Left ventricle myocardium superior (tissue), 1 donor: ENCODE measurements at regions of chr14 and their contacts with region 1.

Region 1: GRCh38 chr14:55707365-55707804 is 127.4 kb downstream of the KTN1 start:
- DNase-seq: no peak
- ATAC-seq: peak; percentile 28

Region 2: DNA sequence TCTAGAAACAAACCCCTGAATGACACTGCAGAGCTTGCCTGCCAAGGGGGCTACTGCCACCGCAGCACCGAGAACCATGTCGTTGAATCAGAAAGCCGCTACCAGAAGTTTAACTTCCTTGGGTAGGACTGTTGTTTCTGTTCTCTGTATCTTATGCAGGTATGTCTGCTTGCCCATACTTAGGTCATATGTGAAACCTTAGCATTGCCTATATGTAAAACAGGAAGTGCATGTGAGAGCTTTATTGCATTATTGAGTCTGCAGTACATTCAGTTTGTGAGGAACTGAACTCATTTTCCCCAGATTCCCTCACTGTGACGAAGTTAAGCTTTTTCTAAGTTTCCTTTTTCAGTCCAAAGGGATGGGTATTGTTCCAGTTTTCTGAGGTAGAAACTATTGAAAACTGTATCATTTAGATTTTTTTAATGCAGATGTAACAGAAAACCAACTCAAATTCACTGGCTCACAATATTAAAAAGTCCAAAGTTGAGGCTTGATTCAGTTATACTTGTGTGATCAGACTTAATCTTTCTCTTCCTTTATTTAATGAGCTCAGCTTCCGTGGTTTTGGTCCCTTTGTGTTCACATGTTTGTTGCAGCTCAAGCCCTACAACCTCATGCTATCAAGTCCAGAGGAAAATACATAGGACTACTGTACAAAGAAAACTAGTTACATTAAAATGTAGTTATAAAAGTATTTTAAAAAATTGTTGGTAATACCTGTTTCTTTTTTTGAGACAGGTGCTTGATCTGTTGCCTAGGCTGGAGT is 429.2 kb before region 1 on chr14:
- intact Hi-C with region 1: no loop called
- DNase-seq: no peak
- ATAC-seq: no peak

Region 3: DNA sequence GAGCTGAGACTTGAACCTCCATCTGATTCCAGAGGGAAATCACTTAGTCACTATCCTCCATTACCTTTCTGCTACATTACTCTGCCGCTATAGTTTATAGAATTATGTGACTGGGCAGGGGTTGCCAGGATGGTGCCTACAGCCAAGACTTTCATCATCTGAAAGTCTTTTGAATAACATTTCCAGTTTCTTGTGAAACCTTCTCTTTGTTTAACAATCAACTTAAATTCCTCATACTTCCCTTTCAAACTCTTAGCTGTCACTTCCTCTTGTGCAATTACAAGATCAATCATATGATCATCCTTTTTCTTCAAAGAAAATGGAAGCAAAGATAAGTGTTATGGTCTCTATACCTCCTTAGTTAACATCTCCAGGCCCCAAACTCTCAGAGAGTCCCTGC is 385.4 kb after region 1 on chr14:
- intact Hi-C with region 1: no loop called
- DNase-seq: no peak
- ATAC-seq: no peak

Region 4: DNA sequence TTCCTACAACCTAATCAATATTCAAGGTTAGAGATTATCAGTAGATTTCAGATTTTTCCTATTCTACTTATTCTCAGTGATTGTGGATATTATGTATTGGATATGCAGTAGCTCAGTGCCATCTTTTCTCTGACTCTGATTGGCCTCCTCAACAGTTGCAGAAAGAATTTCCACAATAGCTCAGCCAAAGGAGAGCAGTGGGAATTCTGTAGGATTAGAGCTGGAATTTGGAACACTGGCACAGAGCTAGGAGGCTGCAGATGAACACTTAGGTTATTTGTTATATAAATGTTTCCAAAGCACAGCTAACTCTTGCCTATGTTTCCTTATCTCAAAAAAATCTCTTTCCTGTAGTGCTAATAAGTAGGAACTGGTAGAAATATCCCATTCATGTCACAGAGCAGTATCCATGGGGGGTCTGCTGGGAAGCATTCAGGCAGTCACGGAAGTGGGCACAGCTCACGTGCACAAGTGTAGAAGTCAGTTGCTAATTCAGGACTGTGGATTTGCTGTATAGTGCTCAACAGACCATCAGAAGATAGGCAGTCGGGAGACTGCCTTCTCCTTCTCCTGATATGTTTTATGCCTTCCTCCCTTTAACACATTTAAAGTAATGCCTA is 756.0 kb after region 1 on chr14:
- intact Hi-C with region 1: loop called (anchors 10 kb)
- DNase-seq: no peak
- ATAC-seq: no peak